ENCODE measurements at regions of chr20 and their contacts with region 1.

Region 1: GRCh38 chr20:31547017-31547675 is 32.9 kb downstream of the HM13 start:
- DNase-seq: peak; percentile 69 to 82
- H3K4me3 ChIP-seq: peak overlapping the region; percentile 61
- H3K27ac ChIP-seq: peak overlapping the region; percentile 89
- H3K4me1 ChIP-seq: peaks cover 50% of the 10 kb centered on the region
- H3K27me3 ChIP-seq: no peaks in the 10 kb centered on the region
- CTCF ChIP-seq: no peak

Region 2: GRCh38 chr20:31485450-31486339 is 61.5 kb before region 1 on chr20:
- CTCF ChIA-PET with region 1: no interaction called
- POLR2A ChIA-PET with region 1: interaction called, 13 read pairs
- intact Hi-C with region 1: no loop called
- DNase-seq: no peak
- H3K4me3 ChIP-seq: no peak overlapping the region
- H3K27ac ChIP-seq: no peak overlapping the region
- H3K4me1 ChIP-seq: no peaks in the 10 kb centered on the region
- H3K27me3 ChIP-seq: no peaks in the 10 kb centered on the region
- CTCF ChIP-seq: no peak

Region 3: DNA sequence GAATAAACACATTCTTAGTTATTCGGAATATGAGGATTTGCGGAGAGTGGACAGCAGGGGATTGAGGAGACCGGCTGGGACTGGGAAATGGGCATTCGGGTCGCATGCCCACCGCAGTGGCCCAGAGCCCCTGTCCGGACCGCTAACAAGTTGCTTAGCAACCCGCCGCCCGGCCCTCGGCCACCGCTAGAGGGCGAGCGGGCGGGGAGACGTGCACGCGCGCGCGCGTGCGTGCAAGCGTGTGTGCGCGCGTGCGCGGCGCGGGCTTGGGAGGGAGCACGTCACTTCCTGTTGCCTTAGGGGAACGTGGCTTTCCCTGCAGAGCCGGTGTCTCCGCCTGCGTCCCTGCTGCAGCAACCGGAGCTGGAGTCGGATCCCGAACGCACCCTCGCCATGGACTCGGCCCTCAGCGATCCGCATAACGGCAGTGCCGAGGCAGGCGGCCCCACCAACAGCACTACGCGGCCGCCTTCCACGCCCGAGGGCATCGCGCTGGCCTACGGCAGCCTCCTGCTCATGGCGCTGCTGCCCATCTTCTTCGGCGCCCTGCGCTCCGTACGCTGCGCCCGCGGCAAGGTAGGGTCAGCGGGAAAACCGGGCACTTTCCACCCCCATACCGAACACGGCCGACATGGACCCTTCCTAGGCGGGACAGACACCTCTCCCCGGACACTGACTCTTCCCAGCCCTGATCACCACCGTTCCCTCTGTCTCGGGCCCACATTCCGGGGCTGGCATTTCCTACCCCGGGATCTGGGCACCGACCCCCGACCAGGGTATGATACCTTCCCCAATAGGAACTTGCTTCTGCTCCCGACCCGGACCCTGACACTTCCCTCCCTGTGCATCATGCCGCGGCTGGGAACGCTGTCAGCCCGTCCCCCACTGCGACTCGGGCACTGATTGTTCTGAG is 32.7 kb before region 1 on chr20 and contains the start of gene HM13:
- CTCF ChIA-PET with region 1: no interaction called
- POLR2A ChIA-PET with region 1: interaction called, 11 read pairs
- intact Hi-C with region 1: loop called (anchors 2 kb)
- DNase-seq: peak; percentile 76 to 90
- H3K4me3 ChIP-seq: peak within 1 kb of the TSS; percentile 95
- H3K27ac ChIP-seq: peak within 1 kb of the TSS; percentile 68
- H3K4me1 ChIP-seq: peaks cover 28% of the 10 kb centered on the region
- H3K27me3 ChIP-seq: no peaks in the 10 kb centered on the region
- CTCF ChIP-seq: peak; percentile 94
- total RNA-seq, gene HM13: 220 and 272 TPM in 2 replicates

Region 4: DNA sequence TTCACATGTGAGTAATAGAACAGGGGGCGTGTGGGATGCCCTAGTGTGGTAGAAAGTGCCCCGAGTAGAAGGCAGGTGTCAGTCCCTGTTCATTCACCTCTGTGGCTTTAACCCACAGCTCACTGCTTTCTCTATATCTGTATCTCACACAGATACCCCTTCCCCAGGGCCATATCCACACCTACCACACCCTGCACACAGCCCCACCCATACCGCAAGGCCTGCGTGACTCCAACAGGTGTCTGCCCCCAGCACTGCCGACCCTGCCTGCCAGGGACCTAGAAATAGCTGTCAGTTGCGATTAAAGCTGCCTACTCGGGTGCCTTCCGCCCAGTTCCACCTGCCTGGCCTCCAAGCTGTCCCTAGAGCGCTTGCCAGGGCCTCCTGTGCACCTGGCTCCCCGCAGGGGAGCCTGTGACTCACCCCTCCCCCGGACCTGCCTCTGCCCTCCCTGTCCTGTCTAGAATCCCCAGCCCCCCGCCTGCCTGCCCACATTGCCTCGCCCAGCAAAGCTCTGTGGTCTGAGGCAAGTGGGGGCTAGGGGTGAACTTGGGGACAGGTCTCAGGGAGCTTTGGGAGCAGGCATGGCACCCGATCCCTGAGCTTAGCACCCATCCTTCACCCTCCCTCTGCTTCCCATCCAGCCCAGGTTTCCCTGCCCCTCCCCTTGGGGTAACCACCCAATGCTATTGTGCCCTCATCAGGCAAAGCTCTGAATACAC is 19.7 kb after region 1 on chr20:
- CTCF ChIA-PET with region 1: interaction called, 6 read pairs
- POLR2A ChIA-PET with region 1: interaction called, 29 read pairs
- intact Hi-C with region 1: no loop called
- DNase-seq: peak; percentile 95 to 99
- H3K4me3 ChIP-seq: peak overlapping the region; percentile 47; the same call in 1 of the 2 replicates
- H3K27ac ChIP-seq: peak overlapping the region; percentile 99
- H3K4me1 ChIP-seq: peaks cover 83% of the 10 kb centered on the region
- H3K27me3 ChIP-seq: no peaks in the 10 kb centered on the region
- CTCF ChIP-seq: 0 out of 2 replicates have a peak, but pooled peaks have one; percentile 47

Measured in PC-9 (cell line).